ENCODE measurements at regions of chr2 and their contacts with region 1.

Region 1: DNA sequence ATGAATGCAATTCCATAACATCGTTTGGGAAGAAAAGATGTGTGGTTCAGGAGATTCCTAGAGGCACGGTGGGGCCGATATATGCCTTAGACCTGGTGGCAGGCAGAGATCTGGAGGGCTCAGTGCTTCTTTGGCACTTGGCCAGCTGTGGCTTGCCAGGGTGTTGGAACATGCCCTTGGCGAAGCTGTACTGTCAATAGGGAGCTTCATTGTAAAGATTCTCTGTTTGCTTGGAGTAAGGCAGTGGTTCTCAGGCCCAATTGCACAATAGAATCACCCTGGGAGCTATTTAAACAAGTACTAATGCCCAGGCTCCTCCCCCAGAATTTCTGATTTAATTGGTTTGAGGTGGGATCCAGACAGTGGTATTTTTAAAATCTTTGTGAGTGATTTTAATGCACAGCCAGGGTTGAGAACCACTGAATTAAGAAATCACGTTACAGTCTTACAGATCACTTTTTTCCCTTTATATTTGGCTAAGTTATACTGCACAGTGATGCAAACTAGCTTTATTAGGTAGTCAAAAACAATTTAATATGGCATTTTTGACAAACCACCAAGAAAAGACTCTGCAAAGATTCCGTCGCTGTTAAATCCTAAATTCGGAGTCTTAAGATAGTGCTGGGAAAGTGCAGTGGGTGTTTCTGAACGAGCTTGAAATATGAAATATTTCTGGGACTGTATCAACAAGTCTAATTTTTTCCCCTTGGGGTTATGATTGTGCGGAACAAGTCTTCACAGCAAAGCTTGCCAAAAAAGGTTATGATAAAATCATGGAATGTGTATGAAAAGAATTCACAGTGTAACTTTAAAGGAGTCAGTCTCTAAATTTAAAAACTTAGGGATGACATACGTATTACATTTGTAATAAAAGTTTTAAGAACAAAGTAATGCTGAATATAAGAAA is 78.0 kb downstream of the CRIM1 start:
- DNase-seq: no peak

Region 2: GRCh38 chr2:36197181-36197971 is 236.2 kb before region 1 on chr2:
- intact Hi-C with region 1: no loop called
- DNase-seq: no peak

Region 3: GRCh38 chr2:36450466-36451196 is 17.1 kb after region 1 on chr2:
- intact Hi-C with region 1: loop called (anchors 2 kb)
- DNase-seq: no peak

Region 4: GRCh38 chr2:36478332-36478738 is 44.8 kb after region 1 on chr2:
- intact Hi-C with region 1: no loop called
- DNase-seq: no peak

Region 5: GRCh38 chr2:36589230-36589630 is 155.7 kb after region 1 on chr2:
- intact Hi-C with region 1: no loop called
- DNase-seq: no peak

Measured in cardiac septum (tissue), 1 donor.